HCT116 (cell line): ENCODE measurements at regions of chr1 and their contacts with region 1.

Region 1: DNA sequence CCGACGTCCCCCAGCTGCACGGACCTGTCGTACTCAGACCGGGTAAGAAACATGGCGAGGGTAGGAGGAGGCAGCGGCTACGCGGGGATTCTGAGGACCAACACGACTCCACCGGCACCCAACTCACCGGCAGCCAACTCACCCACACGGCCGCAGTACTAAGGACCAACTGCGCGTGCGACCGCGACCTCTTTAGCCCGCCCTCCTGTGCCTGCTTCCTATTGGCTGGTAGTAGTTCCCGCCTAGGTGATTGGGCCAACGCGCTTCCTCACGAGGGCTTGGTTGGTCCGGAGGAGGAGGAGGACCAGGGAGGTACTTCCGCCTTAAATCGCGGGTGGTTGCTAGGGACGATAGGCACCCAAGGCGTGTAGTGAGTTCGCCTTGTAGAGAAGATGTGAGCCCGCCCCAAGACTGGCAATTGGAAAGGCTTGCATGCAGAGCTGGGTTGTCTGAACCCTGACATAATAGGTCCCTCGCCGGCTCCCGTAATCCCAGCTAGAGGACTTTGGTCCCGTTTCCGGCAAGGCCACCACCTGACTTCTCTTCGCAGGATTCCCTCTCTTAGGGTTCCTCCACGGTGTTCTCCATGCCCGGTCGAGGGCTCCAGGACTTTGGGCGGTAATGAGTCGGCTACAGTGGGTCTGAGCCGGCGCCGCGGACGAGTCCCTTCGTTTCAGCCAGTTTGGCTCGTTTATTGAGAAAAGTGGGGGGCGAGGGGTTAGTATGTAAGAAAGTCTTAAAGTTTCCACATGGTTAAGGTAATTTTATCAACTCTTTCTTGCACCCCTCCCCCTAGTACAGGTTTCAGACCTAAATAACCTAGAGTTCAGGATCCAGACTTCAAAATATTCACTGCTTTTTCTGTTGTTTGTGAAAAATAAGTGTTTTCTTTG is at the start of gene PSMA5:
- DNase-seq: peak; percentile 99
- ATAC-seq: peak; percentile 96
- H3K4me3 ChIP-seq: peak within 1 kb of the TSS; percentile 57 to 82
- H3K27ac ChIP-seq: peak within 1 kb of the TSS; percentile 68
- H3K4me1 ChIP-seq: peaks cover 7 to 29% of the 10 kb centered on the region in 2 experiments
- H3K27me3 ChIP-seq: no peaks in the 10 kb centered on the region
- CTCF ChIP-seq: no peak
- POLR2A ChIP-seq: no peak
- RAD21 ChIP-seq: no peak
- total RNA-seq, gene PSMA5: 169 TPM

Region 2: DNA sequence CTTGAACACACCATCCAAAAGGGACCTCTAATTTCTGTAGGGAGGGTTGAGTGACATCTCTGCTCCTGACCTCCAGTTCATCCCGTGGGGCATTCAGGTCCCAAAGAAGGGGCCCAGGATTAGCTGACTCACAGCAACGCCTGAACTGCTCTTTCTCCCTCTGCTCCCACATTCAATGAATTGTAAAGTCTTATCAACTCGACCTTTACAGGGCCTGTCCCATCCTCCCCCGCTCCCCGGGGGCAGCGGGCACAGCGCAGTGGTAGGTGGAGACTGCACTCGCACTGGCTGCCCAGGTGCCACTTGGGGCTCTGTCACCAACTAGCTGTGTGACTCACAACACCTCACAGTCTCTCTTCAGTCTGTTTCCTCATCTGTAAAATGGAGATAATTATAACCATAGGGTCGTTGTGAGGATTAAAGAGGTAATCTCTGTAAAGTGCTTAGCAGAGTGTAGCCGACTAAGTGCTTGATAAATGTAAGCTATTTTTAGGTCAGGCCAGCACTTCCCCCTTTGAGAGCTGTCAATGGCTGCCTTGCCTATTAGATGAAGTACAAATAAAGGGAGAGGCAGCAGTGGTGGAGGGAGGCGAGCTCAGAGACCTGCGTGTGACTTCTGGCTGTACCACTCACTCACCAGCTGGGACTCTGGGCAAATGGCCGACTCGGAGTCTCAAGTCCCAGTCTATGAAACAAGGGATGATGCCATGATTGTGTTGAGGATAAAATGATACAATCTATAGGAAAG is 119.1 kb before region 1 on chr1:
- CTCF ChIA-PET with region 1: no interaction called
- POLR2A ChIA-PET with region 1: no interaction called
- RAD21 ChIA-PET with region 1: no interaction called
- intact Hi-C with region 1: no loop called
- DNase-seq: no peak
- ATAC-seq: no peak
- H3K4me3 ChIP-seq: no peak overlapping the region
- H3K27ac ChIP-seq: no peak overlapping the region
- H3K4me1 ChIP-seq: 0 out of 4 replicates have a peak, but pooled peaks cover 0 to 3% of the 10 kb centered on the region in 2 experiments
- H3K27me3 ChIP-seq: no peaks in the 10 kb centered on the region
- CTCF ChIP-seq: no peak
- POLR2A ChIP-seq: no peak
- RAD21 ChIP-seq: no peak

Region 3: GRCh38 chr1:109472779-109473178 is 46.3 kb after region 1 on chr1:
- CTCF ChIA-PET with region 1: no interaction called
- POLR2A ChIA-PET with region 1: no interaction called
- RAD21 ChIA-PET with region 1: no interaction called
- intact Hi-C with region 1: no loop called
- DNase-seq: no peak
- ATAC-seq: no peak
- H3K4me3 ChIP-seq: no peak overlapping the region
- H3K27ac ChIP-seq: no peak overlapping the region
- H3K4me1 ChIP-seq: peaks cover 2 to 9% of the 10 kb centered on the region in 2 experiments; a peak in 3 of 4 replicates
- H3K27me3 ChIP-seq: peaks cover 34% of the 10 kb centered on the region
- CTCF ChIP-seq: no peak
- POLR2A ChIP-seq: no peak
- RAD21 ChIP-seq: no peak

Region 4: DNA sequence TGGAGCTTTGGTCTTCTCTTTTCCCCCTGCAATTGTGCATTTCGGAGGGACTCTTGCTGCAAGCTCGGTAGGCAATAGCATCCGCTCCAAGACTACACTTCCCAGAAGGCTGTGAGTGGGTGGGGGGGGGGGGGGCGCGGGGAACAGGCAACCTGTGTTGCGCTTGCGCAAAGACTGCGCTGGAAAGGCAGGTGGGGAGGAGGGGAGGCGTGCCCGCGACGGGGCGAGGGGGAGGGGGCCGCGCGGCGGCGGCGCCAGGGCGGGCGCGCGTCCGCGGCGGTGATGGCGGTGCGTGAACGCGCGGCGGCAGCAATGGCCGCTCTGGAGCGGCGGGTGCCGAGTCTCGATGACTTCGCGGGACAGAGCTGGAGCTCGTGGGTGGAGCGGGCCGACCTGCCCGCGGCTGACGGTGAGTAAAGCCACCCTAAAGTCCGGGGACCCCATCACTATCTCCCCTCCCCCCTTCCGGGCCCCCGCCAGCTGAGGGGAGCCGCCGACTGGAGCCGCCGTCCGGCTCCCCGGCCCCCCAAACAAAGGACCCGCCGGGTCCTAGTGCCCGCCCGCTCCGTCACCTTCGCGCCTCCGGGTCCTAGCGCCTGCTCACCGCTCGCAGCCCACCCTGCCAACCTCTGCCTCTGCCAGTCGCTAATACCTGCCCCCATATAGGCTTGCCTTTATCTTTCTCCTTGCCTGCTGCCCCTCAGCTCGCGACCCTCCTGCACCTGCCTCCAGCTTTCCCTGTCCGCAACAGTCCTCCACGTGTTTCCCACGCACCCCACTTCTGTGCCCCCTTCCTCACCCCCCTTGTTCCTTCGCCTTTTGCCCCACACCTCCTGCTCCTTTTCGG is 57.4 kb after region 1 on chr1 and contains the start of gene ATXN7L2:
- CTCF ChIA-PET with region 1: no interaction called
- POLR2A ChIA-PET with region 1: no interaction called
- RAD21 ChIA-PET with region 1: no interaction called
- intact Hi-C with region 1: loop called (anchors 5 kb)
- DNase-seq: peak; percentile 77
- ATAC-seq: peak; percentile 88
- H3K4me3 ChIP-seq: peak within 1 kb of the TSS; percentile 77 to 91
- H3K27ac ChIP-seq: peak within 1 kb of the TSS; percentile 77
- H3K4me1 ChIP-seq: peaks cover 8 to 21% of the 10 kb centered on the region in 2 experiments; a peak in 3 of 4 replicates
- H3K27me3 ChIP-seq: 0 out of 2 replicates have a peak, but pooled peaks cover 6% of the 10 kb centered on the region
- CTCF ChIP-seq: no peak
- POLR2A ChIP-seq: peak; percentile 21
- RAD21 ChIP-seq: no peak
- total RNA-seq, gene ATXN7L2: 7.2 TPM